ENCODE measurements at regions of chr1 and their contacts with region 1.

Region 1: GRCh38 chr1:151254217-151255213 is at the start of gene PSMD4:
- DNase-seq: peak; percentile 97
- H3K4me3 ChIP-seq: peak within 1 kb of the TSS; percentile 58 to 76
- H3K27ac ChIP-seq: peak within 1 kb of the TSS; percentile 72 to 87
- H3K4me1 ChIP-seq: peaks cover 0 to 4% of the 10 kb centered on the region in 2 experiments; a peak in 1 of 4 replicates
- H3K27me3 ChIP-seq: no peaks in the 10 kb centered on the region
- CTCF ChIP-seq: no peak
- EP300 ChIP-seq: no peak
- RAD21 ChIP-seq: no peak
- polyA plus RNA-seq, gene PSMD4: 419 and 518 TPM in 2 replicates

Region 2: DNA sequence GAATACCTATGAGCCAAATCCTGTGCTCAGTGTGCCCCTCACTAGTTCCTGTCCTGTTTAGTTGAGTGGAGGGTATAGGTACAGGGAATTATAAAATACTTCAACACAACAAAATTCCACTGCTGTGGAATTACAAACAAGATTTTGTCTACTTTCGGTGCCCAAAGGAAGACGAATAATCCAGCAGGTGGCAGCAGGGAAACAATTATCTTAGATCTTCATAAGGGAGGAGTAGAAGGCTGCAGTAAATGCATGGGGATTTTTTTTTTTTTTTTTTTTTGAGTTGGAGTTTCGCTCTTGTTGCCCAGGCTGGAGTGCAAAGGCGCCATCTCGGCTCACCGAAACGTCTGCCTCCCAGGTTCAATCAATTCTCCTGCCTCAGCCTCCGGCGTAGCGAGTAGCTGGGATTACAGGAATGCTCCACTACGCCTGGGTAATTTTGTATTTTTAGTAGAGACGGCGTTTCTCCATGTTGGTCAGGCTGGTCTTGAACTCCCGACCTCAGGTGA is 58.2 kb before region 1 on chr1:
- CTCF ChIA-PET with region 1: interaction called, 27 read pairs
- POLR2A ChIA-PET with region 1: interaction called, 4 read pairs
- DNase-seq: peak; percentile 62
- H3K4me3 ChIP-seq: peak overlapping the region; percentile 12 to 51; a peak in 3 of 4 replicates
- H3K27ac ChIP-seq: peak overlapping the region; percentile 80 to 93
- H3K4me1 ChIP-seq: peaks cover 5 to 10% of the 10 kb centered on the region in 2 experiments; a peak in 3 of 4 replicates
- H3K27me3 ChIP-seq: no peaks in the 10 kb centered on the region
- CTCF ChIP-seq: peak; percentile 79
- EP300 ChIP-seq: peak in 1 of 2 experiments; percentile 14; a peak in 1 of 4 replicates
- RAD21 ChIP-seq: peak; percentile 66

Region 3: GRCh38 chr1:151227634-151228033 is 26.9 kb before region 1 on chr1:
- CTCF ChIA-PET with region 1: interaction called, 20 read pairs
- POLR2A ChIA-PET with region 1: no interaction called
- DNase-seq: no peak
- H3K4me3 ChIP-seq: no peak overlapping the region
- H3K27ac ChIP-seq: no peak overlapping the region
- H3K4me1 ChIP-seq: no peaks in the 10 kb centered on the region
- H3K27me3 ChIP-seq: no peaks in the 10 kb centered on the region
- CTCF ChIP-seq: no peak
- EP300 ChIP-seq: no peak
- RAD21 ChIP-seq: no peak

Region 4: DNA sequence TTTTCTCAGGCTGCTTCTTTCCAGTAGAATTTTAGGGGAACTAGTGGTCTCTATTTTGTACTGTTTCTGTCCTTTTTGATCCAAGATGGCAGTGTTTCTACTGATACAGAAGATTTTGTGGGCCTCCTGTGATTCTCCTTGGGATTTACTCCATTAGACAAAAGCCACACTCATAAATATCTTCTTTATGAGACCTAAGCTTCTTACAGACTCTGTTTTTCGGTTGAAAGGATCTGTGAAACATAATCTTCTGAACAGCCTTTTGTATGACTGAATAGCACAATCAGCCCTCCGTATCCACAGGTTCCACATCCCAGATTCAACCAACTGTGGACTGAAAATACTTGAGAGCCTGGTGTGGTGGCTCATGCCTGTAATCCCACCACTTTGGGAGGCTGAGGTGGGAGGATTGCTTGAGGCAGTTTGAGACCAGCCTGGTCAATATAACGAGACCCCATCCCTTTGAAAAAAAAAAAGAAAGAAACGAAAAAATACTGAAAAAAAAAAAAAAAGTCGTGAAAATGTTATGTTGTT is 10.8 kb before region 1 on chr1:
- CTCF ChIA-PET with region 1: interaction called, 15 read pairs
- POLR2A ChIA-PET with region 1: no interaction called
- DNase-seq: no peak
- H3K4me3 ChIP-seq: no peak overlapping the region
- H3K27ac ChIP-seq: no peak overlapping the region
- H3K4me1 ChIP-seq: no peaks in the 10 kb centered on the region; a peak in 1 of 4 replicates
- H3K27me3 ChIP-seq: no peaks in the 10 kb centered on the region
- CTCF ChIP-seq: no peak
- EP300 ChIP-seq: no peak
- RAD21 ChIP-seq: no peak

Region 5: GRCh38 chr1:151281969-151282882 is 27.7 kb after region 1 on chr1 and contains the start of gene ZNF687:
- CTCF ChIA-PET with region 1: interaction called, 7 read pairs
- POLR2A ChIA-PET with region 1: interaction called, 11 read pairs
- DNase-seq: peak; percentile 97
- H3K4me3 ChIP-seq: peak within 1 kb of the TSS; percentile 70 to 86
- H3K27ac ChIP-seq: peak within 1 kb of the TSS; percentile 98 to 100
- H3K4me1 ChIP-seq: peaks cover 0 to 14% of the 10 kb centered on the region in 2 experiments; a peak in 1 of 4 replicates
- H3K27me3 ChIP-seq: no peaks in the 10 kb centered on the region
- CTCF ChIP-seq: no peak
- EP300 ChIP-seq: no peak
- RAD21 ChIP-seq: no peak
- polyA plus RNA-seq, gene ZNF687: 14.6 and 15.8 TPM in 2 replicates

Region 6: GRCh38 chr1:151534665-151535278 is 280.3 kb after region 1 on chr1:
- CTCF ChIA-PET with region 1: no interaction called
- POLR2A ChIA-PET with region 1: no interaction called
- DNase-seq: peak; percentile 81
- H3K4me3 ChIP-seq: no peak overlapping the region; a peak in 1 of 4 replicates
- H3K27ac ChIP-seq: no peak overlapping the region
- H3K4me1 ChIP-seq: peaks cover 10 to 28% of the 10 kb centered on the region in 2 experiments; a peak in 3 of 4 replicates
- H3K27me3 ChIP-seq: no peaks in the 10 kb centered on the region
- CTCF ChIP-seq: peak; percentile 97
- EP300 ChIP-seq: no peak
- RAD21 ChIP-seq: peak; percentile 85

Region 7: DNA sequence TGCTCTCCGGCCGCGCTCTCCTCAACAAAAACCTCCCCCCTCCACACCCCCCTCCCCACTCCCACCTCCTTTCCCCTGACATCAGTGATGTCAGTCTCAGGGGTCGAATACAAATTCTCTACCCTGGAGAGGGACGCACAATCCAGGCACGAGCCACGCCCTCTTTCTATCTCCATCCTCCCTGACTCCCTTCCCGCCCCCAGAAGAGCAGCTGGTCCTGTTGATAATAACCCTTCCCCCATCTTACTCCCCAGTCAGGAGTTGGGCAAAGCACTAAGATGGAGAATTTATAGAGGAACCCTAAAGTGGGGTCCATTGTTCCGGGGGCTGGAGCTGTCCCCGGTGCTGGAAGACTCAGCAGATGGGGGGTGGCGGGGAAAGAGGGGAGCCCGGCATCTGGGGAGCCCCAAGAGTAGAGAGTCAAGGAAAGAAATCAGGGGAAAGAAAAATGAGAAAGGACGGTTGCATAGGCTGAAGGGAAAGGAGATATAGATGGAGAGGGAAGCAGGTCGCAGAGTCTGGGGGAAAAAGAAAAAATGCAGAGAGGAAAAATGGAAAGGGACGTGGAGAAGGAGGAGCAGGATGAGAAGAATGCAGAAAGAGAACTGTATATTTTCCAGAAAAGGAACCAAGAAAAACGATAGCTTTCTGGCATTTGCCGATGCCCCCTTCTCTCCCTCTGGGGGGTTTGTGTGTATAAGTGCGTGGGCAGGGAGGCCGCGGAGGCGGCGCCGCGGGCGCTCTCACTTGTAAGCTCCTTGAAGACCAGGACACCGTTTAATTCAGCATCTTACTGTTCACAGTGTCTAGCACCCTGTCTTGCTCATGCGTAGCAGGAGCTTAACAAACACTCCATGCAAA is 462.5 kb after region 1 on chr1 and contains the start of gene CELF3:
- CTCF ChIA-PET with region 1: no interaction called
- POLR2A ChIA-PET with region 1: no interaction called
- DNase-seq: peak; percentile 93
- H3K4me3 ChIP-seq: peak within 1 kb of the TSS; percentile 43 to 55; a peak in 3 of 4 replicates
- H3K27ac ChIP-seq: peak within 1 kb of the TSS in 1 of 2 experiments; percentile 77; a peak in 2 of 4 replicates
- H3K4me1 ChIP-seq: peaks cover 0 to 53% of the 10 kb centered on the region in 2 experiments; a peak in 3 of 4 replicates
- H3K27me3 ChIP-seq: peaks cover 34% of the 10 kb centered on the region
- CTCF ChIP-seq: no peak
- EP300 ChIP-seq: no peak
- RAD21 ChIP-seq: no peak
- polyA plus RNA-seq, gene CELF3: 0.25 and 0.65 TPM in 2 replicates

Measured in SK-N-SH (cell line).